ENCODE measurements at regions of chr3 and their contacts with region 1.

Region 1: DNA sequence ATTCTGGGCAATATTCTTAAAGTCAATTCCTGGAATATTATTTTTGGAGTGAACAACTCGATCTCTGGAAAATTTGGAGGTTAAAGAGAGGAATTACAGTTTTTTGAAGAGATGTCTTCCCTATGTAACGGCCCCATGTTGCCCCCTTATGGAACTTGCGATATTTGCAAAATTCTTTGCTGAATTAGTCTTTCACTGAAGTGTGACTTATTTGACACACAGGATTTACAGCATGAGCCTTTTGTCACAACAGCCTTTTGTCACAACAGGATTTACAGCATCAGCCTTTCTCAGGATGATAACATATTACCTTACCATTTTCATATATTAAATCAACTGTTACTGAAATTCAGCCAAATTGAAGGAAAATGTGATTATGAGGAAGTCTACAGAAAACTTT is 37.8 kb upstream of the SPTSSB start:
- DNase-seq: peak in 4 of 9 experiments; percentile 39 to 69 (median 54)
- ATAC-seq: peak; percentile 48
- H3K4me3 ChIP-seq: no peak overlapping the region
- H3K4me3 Mint-ChIP-seq: no peak overlapping the region
- H3K27ac ChIP-seq: no peak overlapping the region
- H3K27ac Mint-ChIP-seq: no peak overlapping the region
- H3K4me1 ChIP-seq: peaks cover 17% of the 10 kb centered on the region
- H3K4me1 Mint-ChIP-seq: peaks cover 25% of the 10 kb centered on the region
- H3K27me3 ChIP-seq: no peaks in the 10 kb centered on the region
- H3K27me3 Mint-ChIP-seq: peaks cover 6% of the 10 kb centered on the region
- CTCF ChIP-seq: peak; percentile 77

Region 2: DNA sequence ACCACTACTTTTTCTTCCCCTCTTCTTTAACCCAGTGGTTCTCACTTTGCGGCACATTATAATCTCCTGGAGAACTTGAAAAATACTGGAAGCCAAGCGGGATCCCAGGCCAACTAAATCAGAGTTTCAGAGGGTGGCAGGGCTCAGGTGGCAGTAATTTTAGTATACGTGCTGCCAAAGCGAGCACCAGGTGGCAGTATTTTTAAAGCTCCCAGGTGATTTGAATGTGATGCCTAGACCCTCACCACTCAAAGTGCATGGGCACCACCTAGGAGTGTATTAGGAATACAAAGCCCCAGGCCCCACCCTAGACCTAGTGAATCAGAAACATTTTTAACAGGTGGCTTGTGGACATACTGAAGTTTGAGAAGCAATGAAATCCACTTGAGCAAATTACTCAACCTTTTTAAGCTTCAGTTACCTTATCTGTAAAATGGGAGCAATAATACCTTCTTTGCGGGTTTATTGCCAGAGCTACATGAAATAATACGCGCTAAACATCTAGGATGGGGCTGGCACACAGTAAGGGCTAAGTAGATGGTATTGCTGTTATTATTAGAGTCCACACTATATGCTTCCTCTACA is 312.2 kb before region 1 on chr3:
- CTCF ChIA-PET with region 1: interaction called, 3 read pairs
- POLR2A ChIA-PET with region 1: no interaction called
- intact Hi-C with region 1: loop called in 1 of 2 experiments (anchors 5 kb)
- DNase-seq: peak in 3 of 9 experiments; percentile 19 to 40 (median 28)
- ATAC-seq: no peak
- H3K4me3 ChIP-seq: no peak overlapping the region
- H3K4me3 Mint-ChIP-seq: no peak overlapping the region
- H3K27ac ChIP-seq: no peak overlapping the region
- H3K27ac Mint-ChIP-seq: no peak overlapping the region
- H3K4me1 ChIP-seq: no peaks in the 10 kb centered on the region
- H3K4me1 Mint-ChIP-seq: no peaks in the 10 kb centered on the region
- H3K27me3 ChIP-seq: no peaks in the 10 kb centered on the region
- H3K27me3 Mint-ChIP-seq: no peaks in the 10 kb centered on the region
- CTCF ChIP-seq: no peak

Region 3: DNA sequence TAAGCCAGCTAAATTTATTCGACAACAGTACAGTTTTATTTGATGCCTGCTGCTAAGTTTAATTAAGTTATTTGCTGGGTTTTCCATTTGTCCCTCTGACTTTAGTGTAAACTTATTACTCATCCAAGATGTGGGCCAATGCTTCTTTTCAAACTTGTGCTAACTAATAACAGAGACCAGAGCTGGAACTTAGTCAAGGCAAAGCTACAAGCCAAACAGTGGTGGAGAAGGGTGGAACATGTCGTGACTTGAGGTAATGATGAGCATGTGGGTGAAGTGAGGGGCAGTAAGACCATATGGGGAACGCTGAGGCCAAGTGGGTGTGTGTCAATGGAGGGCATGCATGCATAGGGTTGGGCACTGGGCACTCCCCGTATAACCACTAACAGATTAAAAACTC is 124.1 kb before region 1 on chr3:
- CTCF ChIA-PET with region 1: interaction called, 10 read pairs
- POLR2A ChIA-PET with region 1: no interaction called
- intact Hi-C with region 1: no loop called
- DNase-seq: no peak
- ATAC-seq: no peak
- H3K4me3 ChIP-seq: no peak overlapping the region
- H3K4me3 Mint-ChIP-seq: no peak overlapping the region
- H3K27ac ChIP-seq: no peak overlapping the region
- H3K27ac Mint-ChIP-seq: no peak overlapping the region
- H3K4me1 ChIP-seq: no peaks in the 10 kb centered on the region
- H3K4me1 Mint-ChIP-seq: no peaks in the 10 kb centered on the region
- H3K27me3 ChIP-seq: no peaks in the 10 kb centered on the region
- H3K27me3 Mint-ChIP-seq: no peaks in the 10 kb centered on the region
- CTCF ChIP-seq: no peak

Region 4: DNA sequence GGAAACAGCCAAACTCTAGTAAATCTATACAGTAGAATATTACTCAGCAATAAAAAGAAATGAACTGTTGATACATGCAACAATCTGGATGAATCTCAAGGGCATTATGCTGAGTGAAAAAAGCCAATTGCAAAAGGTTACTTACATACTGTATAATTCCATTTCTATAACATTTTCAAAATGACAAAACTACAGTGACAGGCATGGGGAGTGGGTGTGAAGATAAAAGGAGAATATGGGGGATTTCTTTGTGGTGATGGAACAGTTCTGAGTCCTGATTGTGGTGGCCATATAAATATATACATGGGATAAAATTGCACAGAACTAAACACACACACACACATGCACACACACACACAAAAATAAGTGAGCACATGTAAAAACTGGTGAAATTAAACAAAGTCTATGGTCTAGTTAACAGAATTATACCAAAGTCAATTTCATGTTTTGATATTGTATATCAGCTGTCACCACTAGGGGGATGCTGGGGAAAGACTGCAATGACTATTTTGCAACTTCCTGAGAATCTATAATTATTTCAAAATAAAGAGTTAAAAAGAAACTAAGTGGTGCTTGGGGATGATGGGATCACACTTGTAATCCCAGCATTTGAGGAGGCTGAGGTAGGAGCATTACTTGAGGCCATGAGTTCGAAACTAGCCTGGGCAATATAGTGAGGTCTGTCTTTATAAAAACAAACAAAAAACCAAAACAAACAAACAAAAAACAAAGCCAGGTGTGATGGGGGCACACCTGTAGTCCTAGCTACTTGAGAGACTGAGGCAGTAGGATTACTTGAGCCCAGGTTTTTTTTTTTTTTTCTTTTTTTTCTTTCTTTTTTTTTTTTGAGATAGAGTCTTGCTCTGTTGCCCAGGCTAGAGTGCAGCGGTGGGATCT is 103.7 kb before region 1 on chr3:
- CTCF ChIA-PET with region 1: interaction called, 44 read pairs
- POLR2A ChIA-PET with region 1: no interaction called
- intact Hi-C with region 1: loop called (anchors 1 to 10 kb)
- DNase-seq: peak in 3 of 9 experiments; percentile 18 to 52 (median 38)
- ATAC-seq: no peak
- H3K4me3 ChIP-seq: no peak overlapping the region
- H3K4me3 Mint-ChIP-seq: no peak overlapping the region
- H3K27ac ChIP-seq: no peak overlapping the region
- H3K27ac Mint-ChIP-seq: no peak overlapping the region
- H3K4me1 ChIP-seq: peaks cover 11% of the 10 kb centered on the region
- H3K4me1 Mint-ChIP-seq: peaks cover 29% of the 10 kb centered on the region
- H3K27me3 ChIP-seq: no peaks in the 10 kb centered on the region
- H3K27me3 Mint-ChIP-seq: peaks cover 3% of the 10 kb centered on the region
- CTCF ChIP-seq: peak; percentile 79

Region 5: GRCh38 chr3:161349529-161350278 is 59.4 kb before region 1 on chr3:
- CTCF ChIA-PET with region 1: interaction called, 3 read pairs
- POLR2A ChIA-PET with region 1: no interaction called
- intact Hi-C with region 1: loop called in 1 of 2 experiments (anchors 5 kb)
- DNase-seq: peak in 7 of 9 experiments; percentile 20 to 73 (median 54)
- ATAC-seq: peak; percentile 90
- H3K4me3 ChIP-seq: no peak overlapping the region
- H3K4me3 Mint-ChIP-seq: no peak overlapping the region
- H3K27ac ChIP-seq: no peak overlapping the region
- H3K27ac Mint-ChIP-seq: peak overlapping the region; percentile 10
- H3K4me1 ChIP-seq: peaks cover 20% of the 10 kb centered on the region
- H3K4me1 Mint-ChIP-seq: peaks cover 21% of the 10 kb centered on the region
- H3K27me3 ChIP-seq: no peaks in the 10 kb centered on the region
- H3K27me3 Mint-ChIP-seq: no peaks in the 10 kb centered on the region
- CTCF ChIP-seq: no peak

Region 6: GRCh38 chr3:161423911-161424522 is 14.9 kb after region 1 on chr3:
- CTCF ChIA-PET with region 1: interaction called, 11 read pairs
- POLR2A ChIA-PET with region 1: no interaction called
- intact Hi-C with region 1: no loop called
- DNase-seq: peak in 2 of 9 experiments; percentile 55 to 63
- ATAC-seq: peak; percentile 57
- H3K4me3 ChIP-seq: no peak overlapping the region
- H3K4me3 Mint-ChIP-seq: no peak overlapping the region
- H3K27ac ChIP-seq: no peak overlapping the region
- H3K27ac Mint-ChIP-seq: no peak overlapping the region
- H3K4me1 ChIP-seq: no peaks in the 10 kb centered on the region
- H3K4me1 Mint-ChIP-seq: no peaks in the 10 kb centered on the region
- H3K27me3 ChIP-seq: no peaks in the 10 kb centered on the region
- H3K27me3 Mint-ChIP-seq: peaks cover 5% of the 10 kb centered on the region
- CTCF ChIP-seq: peak; percentile 78

Measured in CD8-positive, alpha-beta T cell (primary cell).